Esophagus muscularis mucosa (tissue), 4 donors: ENCODE measurements at regions of chr1 and their contacts with region 1.

Region 1: GRCh38 chr1:29181413-29182225 is at the start of gene SRSF4:
- DNase-seq: peak; percentile 99
- H3K4me3 ChIP-seq: peak within 1 kb of the TSS; percentile 73 to 98 (median 88)
- H3K27ac ChIP-seq: peak within 1 kb of the TSS; percentile 98 to 100 (median 99)
- H3K4me1 ChIP-seq: peaks cover 43 to 52% (median 49%) of the 10 kb centered on the region in 4 donors
- H3K27me3 ChIP-seq: no peaks in the 10 kb centered on the region
- CTCF ChIP-seq: peak; percentile 62 to 70 (median 64)
- EP300 ChIP-seq: peak; percentile 17
- POLR2A ChIP-seq: peak; percentile 83
- total RNA-seq, gene SRSF4: 90.3 to 113 (median 98.3) TPM

Region 2: GRCh38 chr1:28642847-28643635 is 538.6 kb before region 1 on chr1 and contains the start of gene TAF12:
- intact Hi-C with region 1: loop called (anchors 10 kb)
- DNase-seq: peak; percentile 96
- H3K4me3 ChIP-seq: peak within 1 kb of the TSS; percentile 77 to 89 (median 82)
- H3K27ac ChIP-seq: peak within 1 kb of the TSS; percentile 83 to 94 (median 88)
- H3K4me1 ChIP-seq: peaks cover 30 to 60% (median 43%) of the 10 kb centered on the region in 4 donors
- H3K27me3 ChIP-seq: no peaks in the 10 kb centered on the region
- CTCF ChIP-seq: peak; percentile 35 to 51 (median 36)
- EP300 ChIP-seq: no peak
- POLR2A ChIP-seq: peak; percentile 87
- total RNA-seq, gene TAF12: 16.1 to 17.6 (median 17.1) TPM

Region 3: DNA sequence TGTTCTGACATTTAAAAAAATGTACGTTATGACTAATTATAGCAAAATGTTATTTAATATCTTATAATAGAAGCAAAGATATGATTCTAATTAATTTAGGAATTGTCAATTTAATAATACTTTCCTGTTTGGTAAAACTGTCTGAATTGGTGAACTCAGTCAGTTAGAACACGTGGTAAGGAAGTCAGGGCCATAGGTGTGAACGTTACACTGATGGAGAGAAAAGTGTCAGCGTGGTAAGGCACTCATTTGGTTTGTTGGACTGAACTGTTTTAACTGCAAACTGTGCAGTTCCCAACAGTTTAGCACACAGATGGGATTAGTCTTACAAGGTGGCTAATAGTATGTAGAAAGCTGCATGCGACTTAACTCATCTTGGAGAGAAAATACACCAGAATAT is 164.4 kb before region 1 on chr1:
- intact Hi-C with region 1: no loop called
- DNase-seq: no peak
- H3K4me3 ChIP-seq: no peak overlapping the region
- H3K27ac ChIP-seq: no peak overlapping the region
- H3K4me1 ChIP-seq: peaks cover 0 to 7% (median 0%) of the 10 kb centered on the region in 4 donors
- H3K27me3 ChIP-seq: no peaks in the 10 kb centered on the region
- CTCF ChIP-seq: no peak
- EP300 ChIP-seq: no peak
- POLR2A ChIP-seq: no peak

Region 4: DNA sequence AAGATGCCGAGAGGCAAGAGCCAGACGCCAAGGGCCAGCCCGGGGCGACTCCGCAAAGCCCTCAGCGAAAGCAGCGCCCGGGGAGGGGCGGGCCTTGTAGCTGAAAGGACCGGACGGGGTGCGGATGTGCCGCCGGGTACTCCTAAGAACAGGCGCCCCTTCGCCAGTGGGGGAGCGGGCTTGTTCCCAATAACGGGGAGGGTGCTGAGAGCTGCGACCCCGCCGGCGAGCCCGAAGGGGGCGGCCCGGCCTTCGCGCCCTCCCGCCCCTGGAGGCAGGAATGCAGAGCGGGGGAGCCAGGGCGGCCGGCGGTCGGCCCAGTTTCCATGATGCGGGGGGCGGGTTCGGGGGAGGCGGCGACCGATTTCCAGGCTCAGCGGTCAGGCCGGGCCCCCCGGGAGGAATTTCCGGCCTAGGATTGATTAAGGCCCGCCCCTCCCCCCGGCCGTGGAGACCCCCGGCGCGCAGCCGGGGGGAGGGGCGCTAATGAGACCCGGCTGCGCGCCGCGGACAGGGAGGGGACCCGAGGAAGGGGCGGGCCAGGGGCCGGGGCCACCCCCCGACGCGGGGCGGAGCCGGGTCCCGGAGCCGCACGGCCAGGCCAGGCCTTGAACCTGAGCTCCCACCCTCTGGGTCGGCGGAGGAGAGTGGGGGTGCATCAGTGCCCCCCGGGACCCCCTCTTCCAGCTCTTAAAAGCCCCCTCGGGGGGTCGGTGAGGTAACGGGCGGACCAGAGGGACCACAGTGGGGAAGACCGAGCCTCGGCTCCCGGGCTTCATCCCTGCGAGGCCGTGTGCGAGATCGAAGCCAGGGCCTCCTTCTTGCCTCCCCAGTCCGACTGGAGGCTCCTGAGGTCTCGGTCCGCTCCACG is 57.0 kb before region 1 on chr1:
- intact Hi-C with region 1: loop called (anchors 2 kb)
- DNase-seq: peak; percentile 96
- H3K4me3 ChIP-seq: peak overlapping the region; percentile 61 to 83 (median 71)
- H3K27ac ChIP-seq: peak overlapping the region; percentile 98 to 100 (median 98)
- H3K4me1 ChIP-seq: peaks cover 27 to 58% (median 51%) of the 10 kb centered on the region in 4 donors
- H3K27me3 ChIP-seq: peaks cover 0 to 7% (median 3%) of the 10 kb centered on the region in 4 donors
- CTCF ChIP-seq: peak; percentile 89 to 90 (median 90)
- EP300 ChIP-seq: no peak
- POLR2A ChIP-seq: peak; percentile 51

Region 5: DNA sequence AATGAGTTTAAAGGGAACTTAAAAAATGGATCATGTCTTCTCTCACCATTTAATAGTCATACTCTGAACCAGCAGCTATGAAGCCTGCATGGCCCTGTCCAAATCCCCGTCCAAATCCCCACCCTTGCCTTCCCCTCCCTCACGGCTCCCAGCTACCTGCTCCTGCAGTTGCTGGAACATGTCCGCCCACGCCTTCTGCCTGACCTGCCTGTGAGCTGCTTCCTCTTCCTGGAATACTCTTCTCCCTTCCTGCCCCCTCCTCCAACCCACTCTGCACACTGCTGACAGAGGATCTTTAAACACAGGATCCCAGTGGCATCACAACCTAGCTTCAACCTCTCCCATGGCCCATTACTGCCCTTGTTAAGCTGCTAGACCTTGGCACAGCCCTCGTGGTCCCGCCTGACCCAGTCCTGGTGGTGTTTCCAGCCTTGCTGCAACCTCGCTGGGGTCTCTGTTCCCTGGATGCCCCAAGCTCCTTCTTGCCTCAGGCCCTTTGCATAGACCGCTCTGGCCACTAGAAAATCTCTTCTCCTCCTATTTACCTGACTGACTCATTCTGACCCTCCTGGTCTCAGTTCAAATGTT is 173.0 kb after region 1 on chr1:
- intact Hi-C with region 1: no loop called
- DNase-seq: no peak
- H3K4me3 ChIP-seq: no peak overlapping the region
- H3K27ac ChIP-seq: no peak overlapping the region
- H3K4me1 ChIP-seq: no peaks in the 10 kb centered on the region
- H3K27me3 ChIP-seq: peaks cover 0 to 75% (median 0%) of the 10 kb centered on the region in 4 donors
- CTCF ChIP-seq: no peak
- EP300 ChIP-seq: no peak
- POLR2A ChIP-seq: no peak